Prostate gland (tissue), 2 donors: ENCODE measurements at regions of chr17 and their contacts with region 1.

Region 1: DNA sequence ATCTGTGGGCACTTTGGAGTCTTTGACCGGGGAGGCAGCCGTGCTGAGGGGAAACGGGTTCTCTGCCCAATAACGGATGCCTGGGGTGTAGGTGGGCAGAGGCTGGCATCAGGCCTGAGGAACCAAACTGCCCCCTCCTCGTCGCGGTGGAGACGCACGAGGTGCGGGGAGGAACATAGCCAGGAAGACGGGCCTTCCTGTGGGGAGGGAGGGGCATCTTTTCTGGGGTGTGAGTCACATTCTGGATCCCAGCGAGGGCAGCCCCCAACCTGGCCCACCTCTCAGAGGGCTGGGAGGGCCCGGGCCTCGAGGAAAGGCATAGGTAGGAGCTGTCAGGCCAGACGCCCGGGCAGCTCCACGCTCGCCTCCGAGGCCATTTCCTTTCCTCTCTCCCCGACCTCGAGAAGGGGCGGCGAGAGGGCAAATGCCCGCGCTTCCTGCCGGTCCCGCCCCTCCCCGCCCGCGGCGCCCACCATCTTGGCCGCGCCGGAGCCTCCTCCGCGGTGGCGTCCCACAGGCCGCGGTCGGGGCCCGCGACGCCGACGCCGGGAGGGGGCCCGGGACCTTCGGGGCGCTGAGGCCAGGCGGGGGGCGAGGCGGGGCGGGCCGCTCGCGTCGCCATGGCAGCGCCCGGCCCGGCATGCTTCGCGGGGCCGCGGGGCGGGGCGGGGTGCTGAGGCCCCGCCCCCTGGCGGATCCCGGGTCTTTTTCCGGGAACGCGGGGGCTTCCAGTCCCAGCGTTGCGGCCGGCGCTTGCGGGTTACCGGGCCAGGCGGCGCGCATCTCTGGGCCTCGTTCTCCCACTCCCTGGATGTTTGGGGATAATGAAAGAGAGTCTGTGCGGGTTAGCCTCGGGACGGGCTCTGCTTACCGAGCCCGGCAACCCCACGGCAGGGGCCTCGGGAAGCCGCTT is 13.2 kb downstream of the RAI1 start:
- DNase-seq: peak; percentile 75
- H3K4me3 ChIP-seq: peak overlapping the region; percentile 52 to 53
- H3K27ac ChIP-seq: peak overlapping the region; percentile 96 to 99
- H3K4me1 ChIP-seq: peaks cover 77% of the 10 kb centered on the region
- H3K27me3 ChIP-seq: no peaks in the 10 kb centered on the region
- CTCF ChIP-seq: peak in 2 of 4 experiments; percentile 9 to 34
- POLR2A ChIP-seq: peak; percentile 84

Region 2: DNA sequence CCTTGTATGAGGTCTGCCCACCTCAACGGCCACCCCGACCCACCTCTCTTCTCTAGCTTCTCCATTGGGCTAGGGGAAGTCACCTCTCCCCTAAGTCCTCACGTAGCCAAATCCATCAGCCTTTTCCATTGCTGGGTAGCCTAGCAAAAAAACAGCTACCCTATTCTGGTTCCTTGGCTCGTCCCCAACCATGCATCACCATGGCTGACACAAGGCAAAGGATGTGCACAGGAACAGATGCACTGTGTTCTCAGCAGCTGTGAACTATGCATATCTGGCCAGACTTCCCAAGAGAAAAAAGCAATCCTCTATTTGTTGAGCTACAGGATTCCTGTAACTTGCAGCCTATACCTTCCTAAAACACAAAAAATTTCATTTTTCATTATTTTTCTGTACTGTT is 435.4 kb before region 1 on chr17:
- intact Hi-C with region 1: no loop called
- DNase-seq: no peak
- H3K4me3 ChIP-seq: no peak overlapping the region
- H3K27ac ChIP-seq: no peak overlapping the region
- H3K4me1 ChIP-seq: peaks cover 4% of the 10 kb centered on the region
- H3K27me3 ChIP-seq: no peaks in the 10 kb centered on the region
- CTCF ChIP-seq: no peak
- POLR2A ChIP-seq: no peak

Region 3: GRCh38 chr17:17280613-17281549 is 413.5 kb before region 1 on chr17 and contains the start of gene COPS3:
- intact Hi-C with region 1: no loop called
- DNase-seq: peak; percentile 99
- H3K4me3 ChIP-seq: peak within 1 kb of the TSS; percentile 84 to 98
- H3K27ac ChIP-seq: peak within 1 kb of the TSS; percentile 93 to 98
- H3K4me1 ChIP-seq: peaks cover 7% of the 10 kb centered on the region
- H3K27me3 ChIP-seq: no peaks in the 10 kb centered on the region
- CTCF ChIP-seq: peak in 1 of 4 experiments; percentile 4
- POLR2A ChIP-seq: peak; percentile 60
- total RNA-seq, gene COPS3: 52.6 to 79.6 TPM

Region 4: DNA sequence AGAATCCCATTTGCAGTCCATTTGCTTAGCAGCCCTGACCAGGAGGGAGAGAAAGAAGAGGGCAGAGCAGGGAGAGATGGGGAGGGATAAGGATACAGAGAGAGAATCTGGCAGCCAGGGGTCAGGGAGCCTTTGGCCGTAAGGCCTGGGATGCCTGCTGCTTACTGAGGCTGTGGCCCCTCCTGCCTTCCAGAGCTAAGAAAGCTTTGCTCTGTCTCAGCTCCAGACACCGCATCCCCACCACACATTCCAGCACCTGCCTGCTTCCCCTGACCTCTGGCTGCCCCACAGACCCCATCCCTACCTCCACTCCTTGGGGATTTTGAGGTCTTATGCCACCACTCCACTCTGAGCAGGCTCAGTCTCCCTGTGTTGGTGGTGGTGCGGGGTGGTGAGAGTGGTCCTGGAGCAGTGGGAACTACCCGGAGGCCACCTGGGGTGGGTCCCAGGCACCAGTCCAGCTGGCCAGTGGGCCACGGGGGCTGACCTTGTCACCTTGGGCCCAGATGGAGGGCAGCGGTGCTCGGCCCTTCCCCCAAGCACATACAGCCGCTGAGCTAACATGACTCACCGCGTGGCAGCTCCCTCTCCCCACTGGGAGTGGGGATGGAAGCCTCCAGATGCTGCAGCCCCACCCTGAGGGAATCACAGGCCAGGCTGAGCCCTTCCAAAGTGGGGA is 45.1 kb after region 1 on chr17:
- intact Hi-C with region 1: loop called (anchors 5 kb)
- DNase-seq: no peak
- H3K4me3 ChIP-seq: no peak overlapping the region
- H3K27ac ChIP-seq: peak overlapping the region; percentile 82 to 90
- H3K4me1 ChIP-seq: peaks cover 47% of the 10 kb centered on the region
- H3K27me3 ChIP-seq: no peaks in the 10 kb centered on the region
- CTCF ChIP-seq: peak in 1 of 4 experiments; percentile 2
- POLR2A ChIP-seq: no peak